ENCODE measurements at regions of chr19 and their contacts with region 1.

Region 1: GRCh38 chr19:41263850-41264580 is at the start of gene HNRNPUL1:
- DNase-seq: peak; percentile 93 to 100 (median 98)
- ATAC-seq: peak; percentile 83
- H3K4me3 ChIP-seq: peak within 1 kb of the TSS; percentile 94
- H3K27ac ChIP-seq: peak within 1 kb of the TSS; percentile 99
- H3K4me1 ChIP-seq: peaks cover 11 to 31% of the 10 kb centered on the region in 2 experiments; a peak in 4 of 5 replicates
- H3K27me3 ChIP-seq: peaks cover 0 to 11% of the 10 kb centered on the region in 2 experiments; a peak in 2 of 5 replicates
- CTCF ChIP-seq: peak; percentile 19 to 54 (median 37); a peak in 3 of 6 replicates
- EP300 ChIP-seq: no peak
- POLR2A ChIP-seq: peak; percentile 54
- RAD21 ChIP-seq: no peak
- polyA plus RNA-seq, gene HNRNPUL1: 7.3 to 9.4 TPM

Region 2: DNA sequence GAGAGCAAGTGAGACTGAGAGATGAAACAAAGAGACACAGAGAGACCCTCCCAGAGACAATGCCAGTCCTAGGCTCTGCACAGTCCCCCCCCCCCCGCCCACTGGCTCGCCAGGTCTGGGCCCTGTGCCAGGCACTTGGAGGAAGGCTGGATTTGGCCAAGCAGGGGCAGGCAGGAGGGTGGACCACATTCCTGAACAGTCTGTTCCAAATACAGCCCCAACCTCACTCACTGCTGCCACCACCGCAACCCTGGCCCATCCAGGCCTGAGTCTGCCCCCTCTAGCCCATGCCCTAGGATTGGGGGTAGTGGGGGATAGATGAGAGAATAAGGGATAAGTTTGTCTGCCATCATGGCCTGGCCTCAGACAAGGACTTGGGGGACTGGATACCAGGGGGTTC is 130.8 kb before region 1 on chr19:
- CTCF ChIA-PET with region 1: no interaction called
- POLR2A ChIA-PET with region 1: no interaction called
- in situ Hi-C with region 1: no loop called
- intact Hi-C with region 1: loop called (anchors 5 kb)
- DNase-seq: no peak
- ATAC-seq: no peak
- H3K4me3 ChIP-seq: no peak overlapping the region
- H3K27ac ChIP-seq: no peak overlapping the region
- H3K4me1 ChIP-seq: peaks cover 0 to 14% of the 10 kb centered on the region in 2 experiments; a peak in 2 of 5 replicates
- H3K27me3 ChIP-seq: peaks cover 0 to 8% of the 10 kb centered on the region in 2 experiments; a peak in 4 of 5 replicates
- CTCF ChIP-seq: no peak
- EP300 ChIP-seq: no peak
- POLR2A ChIP-seq: no peak
- RAD21 ChIP-seq: no peak

Region 3: GRCh38 chr19:41219924-41220567 is 44.0 kb before region 1 on chr19:
- CTCF ChIA-PET with region 1: interaction called, 10 read pairs
- POLR2A ChIA-PET with region 1: interaction called, 10 read pairs
- in situ Hi-C with region 1: no loop called
- intact Hi-C with region 1: loop called (anchors 5 kb)
- DNase-seq: peak; percentile 68 to 87 (median 76)
- ATAC-seq: peak; percentile 73
- H3K4me3 ChIP-seq: peak overlapping the region; percentile 28; the same call in 1 of the 2 replicates
- H3K27ac ChIP-seq: no peak overlapping the region; the same call in 1 of the 3 replicates
- H3K4me1 ChIP-seq: peaks cover 15 to 39% of the 10 kb centered on the region in 2 experiments; a peak in 4 of 5 replicates
- H3K27me3 ChIP-seq: peaks cover 0 to 12% of the 10 kb centered on the region in 2 experiments; a peak in 2 of 5 replicates
- CTCF ChIP-seq: no peak
- EP300 ChIP-seq: peak; percentile 33; the same call in 1 of the 2 replicates
- POLR2A ChIP-seq: no peak
- RAD21 ChIP-seq: no peak

Region 4: DNA sequence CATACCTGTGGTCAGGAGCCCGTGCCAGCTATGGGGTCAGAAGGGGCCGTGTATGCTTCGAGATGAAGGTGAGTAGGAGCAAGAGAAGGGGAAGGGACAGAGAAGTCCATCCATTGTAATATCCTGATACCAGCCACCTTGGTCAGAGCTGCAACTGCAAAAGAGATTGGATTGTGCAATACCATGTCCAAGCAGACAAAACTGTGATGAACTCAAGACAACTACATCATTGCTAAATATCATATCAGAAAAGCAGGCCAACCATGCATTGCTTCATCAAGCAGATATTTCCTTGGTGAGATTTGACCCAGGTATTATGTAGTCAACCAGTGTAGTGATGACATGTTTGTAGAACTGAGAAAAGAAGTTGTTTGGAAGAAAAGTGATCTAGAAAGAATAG is 12.2 kb after region 1 on chr19:
- CTCF ChIA-PET with region 1: no interaction called
- POLR2A ChIA-PET with region 1: interaction called, 12 read pairs
- in situ Hi-C with region 1: no loop called
- intact Hi-C with region 1: no loop called
- DNase-seq: no peak
- ATAC-seq: no peak; the same call in 2 of the 3 replicates
- H3K4me3 ChIP-seq: no peak overlapping the region
- H3K27ac ChIP-seq: no peak overlapping the region
- H3K4me1 ChIP-seq: no peaks in the 10 kb centered on the region
- H3K27me3 ChIP-seq: no peaks in the 10 kb centered on the region
- CTCF ChIP-seq: no peak
- EP300 ChIP-seq: no peak
- POLR2A ChIP-seq: no peak; the same call in 1 of the 2 replicates
- RAD21 ChIP-seq: no peak

Region 5: DNA sequence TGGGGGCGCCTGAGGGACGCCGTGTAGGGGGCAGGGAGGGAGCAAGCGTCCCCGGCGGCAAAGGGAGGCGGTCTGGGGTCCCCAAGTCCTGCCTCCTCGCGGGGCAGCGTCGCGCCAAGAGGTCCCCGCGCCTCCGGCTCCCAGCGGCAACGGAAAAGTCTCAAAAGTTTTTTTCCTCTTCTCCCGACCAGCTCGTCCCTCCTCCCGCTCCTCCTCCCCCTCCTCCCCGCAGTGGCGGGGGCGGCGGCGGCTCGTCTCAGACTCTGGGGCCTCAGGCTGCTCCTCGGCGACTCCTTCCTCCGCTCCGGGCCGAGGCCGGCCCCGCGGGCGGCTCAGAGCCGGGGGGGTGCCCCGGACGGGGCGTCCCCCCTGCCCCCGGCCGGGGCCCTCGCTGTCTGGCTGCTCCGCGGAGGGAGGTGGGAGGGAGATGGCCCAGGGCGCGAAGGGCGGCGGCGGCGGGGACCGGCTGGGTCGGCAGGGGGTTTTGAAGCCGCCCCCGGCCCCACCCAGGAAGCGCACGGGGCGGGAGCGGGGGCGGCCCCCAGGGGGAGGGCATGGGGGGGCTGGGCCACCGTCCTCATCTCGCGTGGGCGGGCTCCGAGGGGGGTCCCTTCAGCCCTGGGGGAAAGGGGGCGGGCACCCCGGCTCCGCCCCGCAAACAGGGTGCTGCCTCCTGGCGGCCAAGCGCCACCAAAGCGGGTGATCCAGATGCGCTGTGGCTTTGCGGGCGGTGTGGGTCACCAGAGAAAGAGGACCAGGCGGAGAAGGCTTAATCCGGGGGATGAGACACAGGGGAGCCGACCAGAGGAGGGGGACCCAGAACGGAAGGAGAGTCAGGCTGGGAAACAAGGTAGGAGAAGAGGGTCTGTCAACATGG is 89.7 kb after region 1 on chr19 and contains the start of gene TGFB1:
- CTCF ChIA-PET with region 1: no interaction called
- POLR2A ChIA-PET with region 1: interaction called, 3 read pairs
- in situ Hi-C with region 1: no loop called
- intact Hi-C with region 1: loop called (anchors 5 kb)
- DNase-seq: peak; percentile 94 to 99 (median 98)
- ATAC-seq: peak; percentile 74
- H3K4me3 ChIP-seq: peak within 1 kb of the TSS; percentile 98
- H3K27ac ChIP-seq: peak within 1 kb of the TSS; percentile 93
- H3K4me1 ChIP-seq: peaks cover 11 to 49% of the 10 kb centered on the region in 2 experiments
- H3K27me3 ChIP-seq: no peaks in the 10 kb centered on the region
- CTCF ChIP-seq: peak; percentile 83 to 94 (median 93)
- EP300 ChIP-seq: 0 out of 2 replicates have a peak, but pooled peaks have one; percentile 23
- POLR2A ChIP-seq: peak; percentile 58
- RAD21 ChIP-seq: peak; percentile 36 to 69
- polyA plus RNA-seq, gene TGFB1: 0.24 to 0.77 TPM

Measured in K562 (cell line).